Common myeloid progenitor, CD34-positive (primary cell): ENCODE measurements at regions of chr6 and their contacts with region 1.

Region 1: GRCh38 chr6:16409531-16410441 is 171.4 kb downstream of the GMPR start:
- DNase-seq: peak; percentile 55 to 88 (median 86)
- H3K4me3 ChIP-seq: no peak overlapping the region
- H3K27ac ChIP-seq: no peak overlapping the region
- H3K4me1 ChIP-seq: peaks cover 0 to 12% (median 4%) of the 10 kb centered on the region in 4 experiments
- H3K27me3 ChIP-seq: no peaks in the 10 kb centered on the region

Region 2: GRCh38 chr6:16420715-16421461 is 11.1 kb after region 1 on chr6:
- CTCF ChIA-PET with region 1: interaction called, 11 read pairs
- POLR2A ChIA-PET with region 1: no interaction called
- DNase-seq: peak; percentile 25 to 82 (median 60)
- H3K4me3 ChIP-seq: no peak overlapping the region
- H3K27ac ChIP-seq: peak overlapping the region; percentile 59 to 71
- H3K4me1 ChIP-seq: peaks cover 0 to 6% (median 2%) of the 10 kb centered on the region in 4 experiments
- H3K27me3 ChIP-seq: no peaks in the 10 kb centered on the region